MCF 10A (cell line): ENCODE measurements at regions of chr7 and their contacts with region 1.

Region 1: DNA sequence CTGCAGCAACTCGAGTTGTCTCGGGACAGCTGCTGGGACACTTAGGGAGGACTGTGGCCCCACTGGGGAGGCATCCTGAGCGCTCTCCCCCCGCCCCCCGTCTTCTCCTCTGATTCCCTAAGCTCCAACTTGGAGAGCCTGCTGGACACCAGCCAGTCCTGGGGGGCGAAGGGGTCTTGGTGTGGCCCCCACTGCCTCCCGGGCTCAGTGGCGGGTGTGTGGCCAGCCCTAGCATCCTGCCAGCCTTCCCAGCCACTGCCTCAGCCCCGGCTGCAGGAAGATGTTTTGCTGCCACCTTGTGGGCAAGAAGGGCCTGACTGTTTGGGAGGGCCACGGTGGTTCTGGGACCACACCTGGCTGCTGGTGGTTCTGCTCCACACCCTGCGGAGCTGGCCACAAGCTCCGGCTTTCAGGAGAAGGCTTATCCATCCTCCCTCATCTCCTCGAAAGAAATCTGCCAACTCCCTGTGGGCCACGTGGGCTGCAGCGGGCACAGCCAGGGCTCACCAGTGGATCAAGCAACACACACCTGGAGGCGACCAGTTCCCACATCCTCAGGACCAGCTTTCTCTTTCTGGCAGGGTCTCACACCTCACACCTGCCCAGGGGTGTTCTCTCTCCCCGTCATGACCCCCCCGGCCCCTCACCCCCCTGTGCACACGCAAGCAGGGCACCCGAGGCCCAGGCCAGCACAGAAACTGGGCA is 24.8 kb downstream of the AGAP3 start:
- DNase-seq: peak; percentile 76
- H3K4me3 Mint-ChIP-seq: no peak overlapping the region
- H3K27ac Mint-ChIP-seq: no peak overlapping the region
- H3K4me1 Mint-ChIP-seq: peaks cover 25% of the 10 kb centered on the region
- H3K27me3 Mint-ChIP-seq: no peaks in the 10 kb centered on the region
- CTCF ChIP-seq: peak; percentile 90

Region 2: GRCh38 chr7:150463461-150463860 is 647.6 kb before region 1 on chr7:
- CTCF ChIA-PET with region 1: no interaction called
- POLR2A ChIA-PET with region 1: no interaction called
- intact Hi-C with region 1: no loop called
- DNase-seq: no peak
- H3K4me3 Mint-ChIP-seq: no peak overlapping the region
- H3K27ac Mint-ChIP-seq: no peak overlapping the region
- H3K4me1 Mint-ChIP-seq: peaks cover 13% of the 10 kb centered on the region
- H3K27me3 Mint-ChIP-seq: no peaks in the 10 kb centered on the region
- CTCF ChIP-seq: no peak

Region 3: GRCh38 chr7:150962553-150963399 is 148.3 kb before region 1 on chr7:
- CTCF ChIA-PET with region 1: interaction called, 12 read pairs
- POLR2A ChIA-PET with region 1: no interaction called
- intact Hi-C with region 1: loop called (anchors 5 kb)
- DNase-seq: peak; percentile 31
- H3K4me3 Mint-ChIP-seq: no peak overlapping the region
- H3K27ac Mint-ChIP-seq: no peak overlapping the region
- H3K4me1 Mint-ChIP-seq: no peaks in the 10 kb centered on the region
- H3K27me3 Mint-ChIP-seq: peaks cover 32% of the 10 kb centered on the region
- CTCF ChIP-seq: peak; percentile 92

Region 4: DNA sequence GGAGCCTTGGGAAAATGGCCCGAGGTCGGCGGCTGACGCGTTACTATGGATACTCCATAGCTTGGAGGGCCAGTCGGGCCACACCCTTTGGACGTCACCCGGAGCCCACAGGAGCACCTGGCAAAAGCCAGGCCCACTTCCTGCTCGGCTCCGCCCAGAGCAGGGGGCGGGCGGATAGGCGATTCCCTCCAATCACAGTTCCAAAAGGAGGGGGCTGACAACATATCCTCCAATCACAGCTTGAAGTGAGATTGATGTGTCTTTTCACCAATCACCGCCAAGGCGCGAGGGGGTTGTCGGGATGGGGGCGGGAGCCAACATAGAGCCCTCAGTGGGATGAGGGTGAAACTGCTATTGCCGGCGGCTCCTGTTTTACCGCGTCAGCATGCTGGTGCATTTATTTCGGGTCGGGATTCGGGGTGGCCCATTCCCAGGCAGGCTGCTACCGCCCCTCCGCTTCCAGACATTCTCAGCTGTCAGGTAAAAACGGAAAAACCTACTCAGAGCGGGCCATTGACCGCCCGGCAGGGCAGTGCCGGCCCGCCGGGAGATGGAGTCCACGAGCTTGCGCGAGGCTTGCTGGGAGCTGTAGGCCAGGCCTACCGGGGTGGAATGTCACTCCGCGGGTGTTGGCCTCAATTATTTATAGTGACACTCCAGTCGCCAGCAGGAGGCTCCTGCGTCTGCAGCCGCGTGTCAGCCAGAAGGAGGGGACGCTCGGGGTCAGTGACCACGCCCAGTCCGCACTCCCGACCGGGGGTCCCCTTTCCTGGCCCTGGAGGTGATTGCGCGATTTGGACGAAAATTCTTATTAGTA is 82.8 kb before region 1 on chr7 and contains the start of gene ABCB8:
- CTCF ChIA-PET with region 1: interaction called, 12 read pairs
- POLR2A ChIA-PET with region 1: interaction called, 12 read pairs
- intact Hi-C with region 1: loop called (anchors 1 kb)
- DNase-seq: peak; percentile 99
- H3K4me3 Mint-ChIP-seq: peak within 1 kb of the TSS; percentile 97
- H3K27ac Mint-ChIP-seq: peak within 1 kb of the TSS; percentile 100
- H3K4me1 Mint-ChIP-seq: peaks cover 29% of the 10 kb centered on the region
- H3K27me3 Mint-ChIP-seq: no peaks in the 10 kb centered on the region
- CTCF ChIP-seq: peak; percentile 37
- total RNA-seq, gene ABCB8: 73.4 and 76.1 TPM in 2 replicates

Region 5: DNA sequence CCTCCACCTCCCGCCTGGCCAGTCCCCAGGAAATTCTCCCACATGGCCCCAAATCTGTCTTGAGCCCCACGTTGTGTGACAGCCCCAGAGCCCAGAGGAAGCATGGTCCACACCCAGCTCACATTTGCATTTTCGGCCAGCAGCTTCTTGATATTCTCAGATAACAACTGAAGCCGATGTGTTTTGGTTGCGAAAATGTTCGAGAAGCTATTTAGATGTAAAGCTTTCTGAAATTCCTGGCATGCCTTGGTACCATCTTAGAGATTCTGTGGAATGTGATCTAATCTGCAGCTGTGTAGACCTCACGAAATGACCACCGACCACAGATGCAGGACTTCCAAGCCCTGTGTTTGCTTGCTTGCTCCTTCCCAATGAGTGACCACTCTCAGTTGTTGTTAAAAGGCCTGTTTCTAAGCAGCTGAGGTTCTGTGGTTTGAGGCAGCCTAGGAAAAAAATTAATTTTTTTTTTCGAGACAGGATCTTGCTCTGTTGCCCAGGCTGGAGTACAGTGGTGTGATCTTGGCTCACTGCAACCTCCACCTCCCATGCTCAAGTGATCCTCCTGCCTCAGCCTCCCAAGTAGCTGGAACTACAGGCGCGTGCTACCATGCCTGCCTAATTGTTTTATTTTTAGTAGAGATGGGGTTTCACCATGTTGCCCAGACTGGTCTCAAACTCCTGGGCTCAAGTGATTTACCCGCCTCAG is 42.9 kb before region 1 on chr7:
- CTCF ChIA-PET with region 1: interaction called, 42 read pairs
- POLR2A ChIA-PET with region 1: interaction called, 80 read pairs
- intact Hi-C with region 1: no loop called
- DNase-seq: no peak
- H3K4me3 Mint-ChIP-seq: no peak overlapping the region
- H3K27ac Mint-ChIP-seq: no peak overlapping the region
- H3K4me1 Mint-ChIP-seq: peaks cover 4% of the 10 kb centered on the region
- H3K27me3 Mint-ChIP-seq: no peaks in the 10 kb centered on the region
- CTCF ChIP-seq: no peak

Region 6: DNA sequence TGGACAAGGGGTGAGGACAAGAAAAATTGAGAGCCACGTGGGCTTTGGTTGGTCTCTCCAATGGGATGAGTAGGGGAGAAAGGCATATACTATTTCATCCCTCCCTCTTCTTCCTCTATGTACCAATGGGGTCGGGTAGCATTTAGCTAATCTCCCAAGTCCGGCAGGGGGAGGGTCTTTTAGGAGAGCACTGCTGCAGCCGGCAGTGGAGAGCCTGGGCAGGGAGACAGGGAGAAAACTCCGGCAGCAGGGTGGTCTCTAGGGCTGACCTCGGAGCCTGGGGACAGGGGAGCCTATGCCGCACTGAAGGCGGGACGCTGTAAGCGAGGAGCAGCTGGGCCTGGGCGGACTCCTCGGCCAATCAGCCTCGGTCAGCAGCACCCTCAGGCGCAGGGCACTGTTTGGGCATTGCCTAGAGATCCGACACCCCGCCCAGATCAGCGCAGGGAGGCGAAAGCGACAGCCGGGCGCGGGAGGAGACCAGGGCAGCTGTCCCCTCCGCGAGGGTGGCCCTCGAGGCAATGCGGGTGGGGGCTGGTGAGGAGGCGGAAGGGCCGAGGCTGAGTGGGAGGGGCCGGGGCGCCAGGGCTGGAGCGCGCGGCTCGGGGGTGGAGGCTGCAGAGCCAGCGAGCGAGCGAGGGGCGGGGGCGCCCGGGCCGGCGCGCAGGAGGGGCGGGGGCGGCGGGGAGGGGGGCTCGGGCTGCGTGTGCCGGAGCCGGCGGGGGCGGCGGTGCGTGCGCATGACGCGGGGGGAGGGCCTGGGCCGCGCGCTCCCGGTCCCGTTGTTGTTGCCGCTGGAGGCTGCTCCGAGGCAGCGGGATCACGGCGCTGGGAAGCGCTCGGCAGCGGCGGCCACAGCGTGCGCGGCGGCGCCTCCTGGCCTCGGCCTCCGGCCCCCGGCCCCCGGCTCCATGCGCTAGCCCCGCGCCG is 25.1 kb before region 1 on chr7 and contains the start of gene AGAP3:
- CTCF ChIA-PET with region 1: interaction called, 315 read pairs
- POLR2A ChIA-PET with region 1: interaction called, 128 read pairs
- intact Hi-C with region 1: loop called (anchors 1 kb)
- DNase-seq: peak; percentile 73
- H3K4me3 Mint-ChIP-seq: peak within 1 kb of the TSS; percentile 77
- H3K27ac Mint-ChIP-seq: peak within 1 kb of the TSS; percentile 44
- H3K4me1 Mint-ChIP-seq: peaks cover 34% of the 10 kb centered on the region
- H3K27me3 Mint-ChIP-seq: no peaks in the 10 kb centered on the region
- CTCF ChIP-seq: no peak
- total RNA-seq, gene AGAP3: 95.6 and 138 TPM in 2 replicates

Region 7: GRCh38 chr7:151123822-151124464 is 12.8 kb after region 1 on chr7:
- CTCF ChIA-PET with region 1: interaction called, 11 read pairs
- POLR2A ChIA-PET with region 1: interaction called, 12 read pairs
- intact Hi-C with region 1: no loop called
- DNase-seq: peak; percentile 82
- H3K4me3 Mint-ChIP-seq: no peak overlapping the region
- H3K27ac Mint-ChIP-seq: no peak overlapping the region
- H3K4me1 Mint-ChIP-seq: peaks cover 6% of the 10 kb centered on the region
- H3K27me3 Mint-ChIP-seq: no peaks in the 10 kb centered on the region
- CTCF ChIP-seq: peak; percentile 96